Aorta (tissue), 5 donors: ENCODE measurements at regions of chr21 and their contacts with region 1.

Region 1: GRCh38 chr21:42973991-42974831 is at the start of gene PKNOX1:
- DNase-seq: peak; percentile 99
- ATAC-seq: peak; percentile 98
- H3K4me3 ChIP-seq: peak within 1 kb of the TSS; percentile 97 to 100
- H3K27ac ChIP-seq: peak within 1 kb of the TSS; percentile 76 to 100
- H3K4me1 ChIP-seq: no peaks in the 10 kb centered on the region
- H3K27me3 ChIP-seq: no peaks in the 10 kb centered on the region
- total RNA-seq, gene PKNOX1: 13.5 to 22.7 TPM

Region 2: DNA sequence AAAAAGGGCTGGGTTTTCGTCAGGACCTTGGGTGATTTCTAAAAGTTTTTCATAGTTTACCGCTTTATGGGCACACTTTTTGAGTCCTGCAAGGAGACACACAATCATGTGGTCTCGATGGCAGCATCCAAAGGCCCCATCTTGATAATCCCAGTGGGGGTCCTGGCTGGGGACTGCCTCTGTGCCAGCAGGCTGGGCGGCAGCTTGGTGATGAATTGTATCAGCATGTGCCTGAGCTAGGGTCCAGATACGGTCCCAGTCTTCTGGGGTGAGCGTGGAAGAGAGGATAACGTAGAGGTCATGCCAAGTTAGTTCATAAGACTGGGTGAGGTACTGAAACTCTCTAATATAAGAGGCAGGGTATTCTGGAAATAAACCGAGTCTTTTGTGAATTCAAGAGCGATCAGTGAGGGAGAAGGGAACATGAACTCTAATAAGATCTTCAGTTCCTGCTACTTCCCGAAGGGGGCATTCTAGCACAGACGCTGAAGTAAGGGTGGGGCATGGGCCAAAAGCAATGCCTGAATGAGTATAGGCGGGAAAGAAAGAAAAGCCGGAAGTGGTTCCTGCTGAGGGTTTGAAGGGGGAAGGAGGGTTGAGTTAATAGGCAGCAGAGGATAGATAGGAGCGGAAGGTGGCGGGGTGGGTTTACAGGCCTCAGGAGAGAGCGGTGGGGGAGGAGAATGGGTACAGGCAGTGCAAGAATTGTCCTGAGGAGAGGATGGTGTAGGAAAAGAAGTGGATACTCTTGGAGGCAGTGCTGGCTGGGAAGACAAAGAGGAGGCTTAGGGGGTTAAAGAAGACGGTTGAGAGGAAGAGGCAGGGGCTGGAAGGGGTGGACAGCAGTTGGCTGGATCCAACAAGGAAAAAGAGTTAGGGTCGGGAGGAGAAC is 50.4 kb before region 1 on chr21:
- intact Hi-C with region 1: loop called in 1 of 2 experiments (anchors 2 kb)
- DNase-seq: peak in 1 of 2 donors; percentile 62
- ATAC-seq: peak; percentile 85
- H3K4me3 ChIP-seq: no peak overlapping the region
- H3K27ac ChIP-seq: no peak overlapping the region
- H3K4me1 ChIP-seq: no peaks in the 10 kb centered on the region
- H3K27me3 ChIP-seq: no peaks in the 10 kb centered on the region

Region 3: GRCh38 chr21:42939582-42940410 is 34.4 kb before region 1 on chr21:
- intact Hi-C with region 1: loop called in 1 of 2 experiments (anchors 2 kb)
- DNase-seq: peak; percentile 78 to 84
- ATAC-seq: peak; percentile 95
- H3K4me3 ChIP-seq: no peak overlapping the region
- H3K27ac ChIP-seq: no peak overlapping the region
- H3K4me1 ChIP-seq: no peaks in the 10 kb centered on the region
- H3K27me3 ChIP-seq: no peaks in the 10 kb centered on the region